ENCODE measurements at regions of chr1 and their contacts with region 1.

Region 1: GRCh38 chr1:21511579-21512522 is 2.6 kb downstream of the ALPL start:
- DNase-seq: peak; percentile 33
- H3K4me3 Mint-ChIP-seq: no peak overlapping the region
- H3K27ac Mint-ChIP-seq: no peak overlapping the region
- H3K4me1 Mint-ChIP-seq: peaks cover 7% of the 10 kb centered on the region
- H3K27me3 Mint-ChIP-seq: peaks cover 23% of the 10 kb centered on the region
- CTCF ChIP-seq: no peak

Region 2: DNA sequence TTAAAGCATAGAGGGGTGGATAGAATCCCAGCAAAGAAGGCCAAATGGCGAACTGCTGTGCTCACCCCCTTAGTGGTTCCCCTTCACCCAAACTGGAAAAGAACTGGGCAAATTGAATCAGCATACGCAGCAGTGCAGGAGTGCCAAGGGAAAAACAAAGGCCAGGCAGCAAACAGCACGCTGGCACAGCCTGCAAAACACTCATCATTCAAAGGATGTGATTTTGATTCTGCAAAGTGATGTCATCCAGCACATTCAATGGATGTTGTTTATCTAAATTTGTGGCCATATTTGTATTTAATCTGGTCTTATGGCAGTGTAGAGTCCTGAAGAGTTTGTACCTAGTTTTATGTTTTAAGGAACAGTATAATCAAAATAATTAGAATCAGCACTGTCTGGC is 149.8 kb before region 1 on chr1:
- CTCF ChIA-PET with region 1: no interaction called
- POLR2A ChIA-PET with region 1: no interaction called
- intact Hi-C with region 1: no loop called
- DNase-seq: no peak
- H3K4me3 Mint-ChIP-seq: no peak overlapping the region
- H3K27ac Mint-ChIP-seq: no peak overlapping the region
- H3K4me1 Mint-ChIP-seq: peaks cover 4% of the 10 kb centered on the region
- H3K27me3 Mint-ChIP-seq: no peaks in the 10 kb centered on the region
- CTCF ChIP-seq: no peak

Region 3: GRCh38 chr1:21594935-21595897 is 83.4 kb after region 1 on chr1:
- CTCF ChIA-PET with region 1: no interaction called
- POLR2A ChIA-PET with region 1: no interaction called
- intact Hi-C with region 1: loop called (anchors 2 kb)
- DNase-seq: peak; percentile 74
- H3K4me3 Mint-ChIP-seq: no peak overlapping the region
- H3K27ac Mint-ChIP-seq: no peak overlapping the region
- H3K4me1 Mint-ChIP-seq: peaks cover 5% of the 10 kb centered on the region
- H3K27me3 Mint-ChIP-seq: peaks cover 20% of the 10 kb centered on the region
- CTCF ChIP-seq: peak; percentile 83

Region 4: DNA sequence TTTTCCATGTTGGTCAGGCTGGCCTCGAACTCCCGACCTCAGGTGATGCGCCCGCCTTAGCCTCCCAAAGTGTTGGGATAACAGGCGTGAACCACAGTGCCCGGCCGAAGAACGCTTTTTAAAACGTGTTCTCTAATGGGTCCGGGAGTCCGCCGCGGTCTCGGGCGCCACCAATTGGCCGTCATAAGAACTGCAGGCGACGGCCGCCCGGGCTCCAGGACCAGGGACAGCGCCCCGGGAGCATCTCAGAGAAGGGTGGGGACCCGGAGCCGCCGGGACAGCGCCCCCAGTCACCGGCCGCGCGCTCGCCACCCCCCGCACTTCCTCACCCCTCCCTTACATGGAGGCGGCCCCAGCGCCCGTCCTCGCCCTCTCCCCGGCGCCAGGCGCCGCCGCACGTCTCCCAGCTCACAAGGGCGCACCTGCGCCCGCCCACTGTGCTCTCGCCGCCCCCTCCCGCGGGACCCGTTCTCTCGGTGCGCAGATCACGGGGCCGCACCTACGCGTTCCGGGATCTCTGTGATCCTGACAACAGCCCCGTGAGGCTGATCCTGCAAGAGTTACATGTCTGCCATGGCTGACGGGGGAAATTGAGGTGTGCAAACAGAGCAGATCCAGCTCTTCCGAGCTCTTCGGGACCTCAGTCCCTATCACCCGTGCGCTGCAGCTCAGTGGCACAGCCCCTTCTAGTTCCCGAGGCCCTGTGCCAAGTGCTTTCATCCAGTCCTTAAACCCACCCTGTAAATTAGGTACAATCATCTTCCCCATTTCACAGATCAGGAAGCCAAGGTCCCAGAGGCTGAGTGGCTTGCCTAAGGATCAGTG is 147.5 kb after region 1 on chr1:
- CTCF ChIA-PET with region 1: interaction called, 6 read pairs
- POLR2A ChIA-PET with region 1: no interaction called
- intact Hi-C with region 1: loop called (anchors 10 kb)
- DNase-seq: peak; percentile 62
- H3K4me3 Mint-ChIP-seq: peak overlapping the region; percentile 35
- H3K27ac Mint-ChIP-seq: no peak overlapping the region
- H3K4me1 Mint-ChIP-seq: no peaks in the 10 kb centered on the region
- H3K27me3 Mint-ChIP-seq: peaks cover 29% of the 10 kb centered on the region
- CTCF ChIP-seq: peak; percentile 99

Measured in MCF 10A (cell line).